ENCODE measurements at regions of chr17 and their contacts with region 1.

Region 1: GRCh38 chr17:43576563-43577229 is 30.6 kb upstream of the ETV4 start:
- DNase-seq: peak; percentile 69
- H3K4me3 Mint-ChIP-seq: no peak overlapping the region
- H3K27ac Mint-ChIP-seq: no peak overlapping the region
- H3K4me1 Mint-ChIP-seq: peaks cover 22% of the 10 kb centered on the region
- H3K27me3 Mint-ChIP-seq: peaks cover 6% of the 10 kb centered on the region

Region 2: DNA sequence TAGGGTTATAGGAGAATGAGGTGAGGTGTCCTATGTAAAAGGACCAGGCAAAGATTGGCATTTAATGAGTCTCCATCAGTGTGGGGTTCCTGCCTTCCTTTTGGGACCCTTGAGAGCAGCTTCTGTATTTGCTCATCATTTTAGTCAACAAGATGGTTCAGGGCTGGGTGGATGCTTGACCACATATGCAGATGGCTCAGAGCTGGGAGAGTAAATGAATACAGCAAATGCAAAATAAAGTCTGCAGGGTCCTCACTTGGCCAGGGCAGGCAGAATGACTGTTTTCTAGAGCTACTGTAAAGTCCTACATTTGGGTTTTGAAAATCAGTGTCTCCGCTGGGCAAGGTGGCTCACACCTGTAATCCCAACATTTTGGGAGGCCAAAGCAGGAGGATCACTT is 26.6 kb after region 1 on chr17:
- CTCF ChIA-PET with region 1: no interaction called
- POLR2A ChIA-PET with region 1: no interaction called
- DNase-seq: no peak
- H3K4me3 Mint-ChIP-seq: no peak overlapping the region
- H3K27ac Mint-ChIP-seq: no peak overlapping the region
- H3K4me1 Mint-ChIP-seq: no peaks in the 10 kb centered on the region
- H3K27me3 Mint-ChIP-seq: peaks cover 11% of the 10 kb centered on the region

Region 3: DNA sequence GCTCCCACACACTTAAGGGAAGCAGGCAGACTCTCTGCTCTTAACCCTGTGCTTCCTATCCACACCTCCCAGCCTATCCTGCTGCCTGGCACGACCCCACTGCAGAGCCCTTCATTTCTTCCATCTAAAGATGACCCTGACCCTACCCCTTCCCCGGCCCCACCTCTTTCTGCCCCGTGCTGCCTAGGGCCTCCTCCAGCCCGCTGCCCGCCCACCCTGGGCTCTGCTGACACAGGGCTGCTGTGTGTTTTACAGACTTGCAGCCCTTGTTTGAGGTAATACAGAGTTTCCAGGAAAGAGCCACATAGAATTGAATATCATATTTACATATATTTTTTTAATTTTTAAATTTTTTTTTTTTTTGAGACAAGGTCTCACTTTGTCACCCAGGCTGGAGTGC is 43.0 kb after region 1 on chr17:
- CTCF ChIA-PET with region 1: no interaction called
- POLR2A ChIA-PET with region 1: no interaction called
- DNase-seq: no peak
- H3K4me3 Mint-ChIP-seq: no peak overlapping the region
- H3K27ac Mint-ChIP-seq: no peak overlapping the region
- H3K4me1 Mint-ChIP-seq: no peaks in the 10 kb centered on the region
- H3K27me3 Mint-ChIP-seq: peaks cover 11% of the 10 kb centered on the region

Region 4: DNA sequence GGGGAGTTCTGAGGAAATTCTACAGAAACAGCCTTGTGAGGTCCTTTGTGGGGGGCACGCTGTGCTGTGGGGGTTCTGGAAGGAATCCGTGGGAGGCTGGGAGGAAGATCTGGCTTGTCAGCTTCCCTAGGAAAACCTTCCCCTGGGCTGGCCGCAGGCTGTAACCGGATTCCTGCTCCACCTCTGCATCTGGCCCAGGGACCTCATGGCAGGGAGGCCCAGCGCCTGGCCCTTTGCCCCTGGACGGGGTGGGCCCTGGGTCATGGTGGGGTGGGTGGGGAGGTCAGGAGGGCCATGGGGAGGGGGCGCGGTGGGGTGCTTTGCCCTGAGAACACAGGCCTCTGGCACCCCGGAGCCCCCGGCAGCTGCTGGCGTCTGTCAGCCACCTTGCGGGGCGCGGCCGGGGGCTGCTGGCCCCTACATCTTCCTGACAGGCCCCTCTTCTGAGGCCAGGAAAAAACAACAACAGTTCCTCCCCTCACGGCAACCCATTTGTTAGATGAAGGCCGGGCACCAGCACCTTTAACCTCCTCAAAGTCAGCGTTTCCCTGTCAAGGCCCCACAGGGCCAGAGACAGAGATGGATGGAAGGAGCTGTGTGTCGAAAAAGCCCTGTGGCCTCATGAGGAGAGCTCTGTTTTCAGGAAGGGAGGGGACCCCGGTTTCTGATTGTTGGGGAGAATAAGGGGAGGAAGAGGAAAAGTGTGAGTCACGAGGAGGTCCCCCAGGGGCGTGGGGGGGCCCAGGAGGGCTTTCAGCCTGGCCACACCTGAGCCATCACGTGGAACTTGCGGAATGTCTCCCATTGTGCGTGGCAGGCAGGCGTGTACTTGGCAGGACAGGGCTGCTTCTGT is 88.6 kb after region 1 on chr17:
- CTCF ChIA-PET with region 1: interaction called, 14 read pairs
- POLR2A ChIA-PET with region 1: interaction called, 3 read pairs
- DNase-seq: no peak
- H3K4me3 Mint-ChIP-seq: no peak overlapping the region
- H3K27ac Mint-ChIP-seq: no peak overlapping the region
- H3K4me1 Mint-ChIP-seq: peaks cover 65% of the 10 kb centered on the region
- H3K27me3 Mint-ChIP-seq: peaks cover 4% of the 10 kb centered on the region

Region 5: DNA sequence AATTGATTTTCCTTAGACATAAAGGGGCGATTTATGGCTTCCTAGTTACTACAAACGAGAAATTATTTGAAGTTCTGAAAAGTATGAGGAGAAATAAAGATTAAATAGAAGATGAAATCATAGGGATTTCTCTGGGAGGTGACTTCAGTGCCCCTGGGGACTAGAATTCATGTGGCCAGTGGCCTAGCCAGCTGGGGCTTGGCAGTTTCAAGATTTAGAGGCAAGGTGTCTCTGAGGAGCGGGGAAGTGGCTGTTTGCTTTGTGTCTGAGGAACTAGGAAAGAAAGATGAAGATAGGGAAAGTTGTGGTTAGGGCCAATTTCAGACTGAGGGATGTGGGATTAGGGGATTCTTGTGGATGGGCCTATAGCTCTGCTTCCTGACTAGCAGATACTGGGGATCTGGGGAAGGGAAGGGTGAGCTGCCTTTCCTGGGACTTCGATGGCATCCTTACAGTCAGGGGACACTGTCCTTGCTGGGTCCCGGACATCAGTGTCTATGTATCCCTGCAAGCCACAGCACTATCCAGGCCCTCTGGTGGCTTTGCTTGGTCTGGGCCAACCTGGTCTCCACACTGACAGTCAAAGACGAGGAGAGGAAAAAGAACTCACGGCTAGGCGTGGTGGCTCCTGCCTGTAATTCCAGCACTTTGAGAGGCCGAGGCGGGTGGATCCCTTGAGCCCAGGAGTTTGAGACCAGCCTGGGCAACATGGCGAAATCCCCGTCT is 107.4 kb after region 1 on chr17:
- CTCF ChIA-PET with region 1: interaction called, 30 read pairs
- POLR2A ChIA-PET with region 1: no interaction called
- DNase-seq: no peak
- H3K4me3 Mint-ChIP-seq: no peak overlapping the region
- H3K27ac Mint-ChIP-seq: no peak overlapping the region
- H3K4me1 Mint-ChIP-seq: no peaks in the 10 kb centered on the region
- H3K27me3 Mint-ChIP-seq: peaks cover 16% of the 10 kb centered on the region

Region 6: GRCh38 chr17:43694077-43694870 is 117.6 kb after region 1 on chr17:
- CTCF ChIA-PET with region 1: interaction called, 18 read pairs
- POLR2A ChIA-PET with region 1: no interaction called
- DNase-seq: peak; percentile 79
- H3K4me3 Mint-ChIP-seq: no peak overlapping the region
- H3K27ac Mint-ChIP-seq: no peak overlapping the region
- H3K4me1 Mint-ChIP-seq: peaks cover 5% of the 10 kb centered on the region
- H3K27me3 Mint-ChIP-seq: peaks cover 12% of the 10 kb centered on the region

Region 7: DNA sequence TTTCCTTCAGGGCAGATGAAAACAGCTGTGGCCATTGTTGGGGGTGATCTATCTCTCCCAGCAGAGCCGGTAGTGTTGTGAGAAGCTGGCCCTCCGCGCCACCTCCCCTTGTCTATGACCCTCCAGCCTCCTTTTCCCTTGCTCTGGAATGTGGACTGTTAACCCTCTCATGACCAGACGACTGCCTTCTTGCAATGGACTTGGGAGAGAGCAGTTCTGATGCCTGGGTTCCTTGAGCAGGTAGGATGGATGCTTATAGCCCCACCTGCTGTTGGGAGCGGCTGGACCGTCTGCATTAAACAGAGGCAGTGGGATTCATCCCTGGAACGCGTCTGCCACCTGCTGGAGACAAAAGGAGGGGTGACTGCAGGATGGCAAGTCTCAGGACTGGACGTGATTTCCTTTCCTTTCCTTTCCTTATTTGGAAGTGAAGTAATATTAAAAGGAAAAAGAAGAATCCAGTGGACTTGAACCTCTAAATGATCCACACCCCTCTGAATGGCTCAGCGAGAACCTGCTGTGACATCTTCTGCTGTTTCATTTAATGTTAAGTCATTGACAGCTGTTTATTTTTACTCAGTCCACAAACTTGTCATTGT is 183.7 kb after region 1 on chr17:
- CTCF ChIA-PET with region 1: interaction called, 35 read pairs
- POLR2A ChIA-PET with region 1: no interaction called
- DNase-seq: peak; percentile 92
- H3K4me3 Mint-ChIP-seq: no peak overlapping the region
- H3K27ac Mint-ChIP-seq: no peak overlapping the region
- H3K4me1 Mint-ChIP-seq: peaks cover 1% of the 10 kb centered on the region
- H3K27me3 Mint-ChIP-seq: peaks cover 32% of the 10 kb centered on the region

Region 8: DNA sequence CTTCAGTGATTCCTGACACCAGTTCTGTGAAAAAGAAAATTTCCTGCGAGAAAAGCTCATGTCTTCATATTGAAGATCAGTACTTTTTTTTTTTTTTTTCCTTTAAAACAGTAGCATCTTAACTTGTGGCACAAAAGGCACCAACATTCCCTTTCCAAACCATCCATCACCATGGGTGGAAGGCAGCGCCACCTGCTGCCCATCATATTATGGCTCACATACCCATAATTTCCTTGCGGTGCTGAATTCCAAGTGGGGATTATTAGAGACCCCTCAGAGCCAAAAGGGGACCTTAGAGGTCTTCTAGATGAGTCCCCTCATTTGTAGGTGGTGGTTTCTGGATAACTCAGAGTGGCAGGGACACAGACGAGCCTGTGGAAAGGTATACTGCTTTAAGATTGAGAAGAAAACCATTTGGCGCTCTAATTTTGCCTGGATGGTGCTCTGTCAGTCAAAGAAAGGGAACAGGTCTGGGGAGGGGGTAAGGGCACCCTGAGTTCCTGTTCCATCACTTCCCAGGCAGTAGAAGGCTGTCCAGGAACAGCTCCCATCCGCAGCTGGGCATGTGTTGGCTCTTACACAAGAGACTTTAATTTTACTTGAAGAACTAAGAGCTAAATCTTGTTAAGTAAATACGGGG is 189.8 kb after region 1 on chr17:
- CTCF ChIA-PET with region 1: interaction called, 35 read pairs
- POLR2A ChIA-PET with region 1: no interaction called
- DNase-seq: peak; percentile 52
- H3K4me3 Mint-ChIP-seq: no peak overlapping the region
- H3K27ac Mint-ChIP-seq: no peak overlapping the region
- H3K4me1 Mint-ChIP-seq: no peaks in the 10 kb centered on the region
- H3K27me3 Mint-ChIP-seq: peaks cover 8% of the 10 kb centered on the region